ENCODE measurements at regions of chr12 and their contacts with region 1.

Region 1: GRCh38 chr12:53213348-53213747 is 6.3 kb upstream of the ITGB7 start:
- DNase-seq: peak; percentile 87
- ATAC-seq: peak; percentile 65
- H3K4me3 ChIP-seq: no peak overlapping the region
- H3K4me3 Mint-ChIP-seq: no peak overlapping the region
- H3K27ac ChIP-seq: no peak overlapping the region
- H3K27ac Mint-ChIP-seq: peak overlapping the region; percentile 46
- H3K4me1 ChIP-seq: peaks cover 57 to 65% of the 10 kb centered on the region in 2 donors
- H3K4me1 Mint-ChIP-seq: peaks cover 70% of the 10 kb centered on the region
- H3K27me3 ChIP-seq: no peaks in the 10 kb centered on the region
- H3K27me3 Mint-ChIP-seq: no peaks in the 10 kb centered on the region
- CTCF ChIP-seq: peak; percentile 97

Region 2: GRCh38 chr12:53190108-53190729 is 23.1 kb before region 1 on chr12:
- CTCF ChIA-PET with region 1: interaction called, 201 read pairs
- POLR2A ChIA-PET with region 1: no interaction called
- intact Hi-C with region 1: no loop called
- DNase-seq: peak; percentile 57
- ATAC-seq: peak; percentile 88
- H3K4me3 ChIP-seq: no peak overlapping the region
- H3K4me3 Mint-ChIP-seq: no peak overlapping the region
- H3K27ac ChIP-seq: no peak overlapping the region
- H3K27ac Mint-ChIP-seq: peak overlapping the region; percentile 56
- H3K4me1 ChIP-seq: no peaks in the 10 kb centered on the region
- H3K4me1 Mint-ChIP-seq: peaks cover 12% of the 10 kb centered on the region
- H3K27me3 ChIP-seq: no peaks in the 10 kb centered on the region
- H3K27me3 Mint-ChIP-seq: no peaks in the 10 kb centered on the region
- CTCF ChIP-seq: peak; percentile 69

Region 3: GRCh38 chr12:53231826-53232645 is 18.7 kb after region 1 on chr12 and contains the start of gene RARG:
- CTCF ChIA-PET with region 1: interaction called, 17 read pairs
- POLR2A ChIA-PET with region 1: no interaction called
- intact Hi-C with region 1: no loop called
- DNase-seq: peak; percentile 40
- ATAC-seq: peak; percentile 63
- H3K4me3 ChIP-seq: peak within 1 kb of the TSS; percentile 17 to 61 (median 53)
- H3K4me3 Mint-ChIP-seq: peak within 1 kb of the TSS; percentile 88
- H3K27ac ChIP-seq: no peak within 1 kb of the TSS
- H3K27ac Mint-ChIP-seq: peak within 1 kb of the TSS; percentile 77
- H3K4me1 ChIP-seq: peaks cover 34 to 46% of the 10 kb centered on the region in 2 donors
- H3K4me1 Mint-ChIP-seq: peaks cover 38% of the 10 kb centered on the region
- H3K27me3 ChIP-seq: peaks cover 0 to 11% (median 2%) of the 10 kb centered on the region in 4 experiments
- H3K27me3 Mint-ChIP-seq: peaks cover 6% of the 10 kb centered on the region
- CTCF ChIP-seq: no peak
- total RNA-seq, gene RARG: 15.0 and 16.7 TPM in 2 replicates